ENCODE measurements at regions of chr1 and their contacts with region 1.

Region 1: DNA sequence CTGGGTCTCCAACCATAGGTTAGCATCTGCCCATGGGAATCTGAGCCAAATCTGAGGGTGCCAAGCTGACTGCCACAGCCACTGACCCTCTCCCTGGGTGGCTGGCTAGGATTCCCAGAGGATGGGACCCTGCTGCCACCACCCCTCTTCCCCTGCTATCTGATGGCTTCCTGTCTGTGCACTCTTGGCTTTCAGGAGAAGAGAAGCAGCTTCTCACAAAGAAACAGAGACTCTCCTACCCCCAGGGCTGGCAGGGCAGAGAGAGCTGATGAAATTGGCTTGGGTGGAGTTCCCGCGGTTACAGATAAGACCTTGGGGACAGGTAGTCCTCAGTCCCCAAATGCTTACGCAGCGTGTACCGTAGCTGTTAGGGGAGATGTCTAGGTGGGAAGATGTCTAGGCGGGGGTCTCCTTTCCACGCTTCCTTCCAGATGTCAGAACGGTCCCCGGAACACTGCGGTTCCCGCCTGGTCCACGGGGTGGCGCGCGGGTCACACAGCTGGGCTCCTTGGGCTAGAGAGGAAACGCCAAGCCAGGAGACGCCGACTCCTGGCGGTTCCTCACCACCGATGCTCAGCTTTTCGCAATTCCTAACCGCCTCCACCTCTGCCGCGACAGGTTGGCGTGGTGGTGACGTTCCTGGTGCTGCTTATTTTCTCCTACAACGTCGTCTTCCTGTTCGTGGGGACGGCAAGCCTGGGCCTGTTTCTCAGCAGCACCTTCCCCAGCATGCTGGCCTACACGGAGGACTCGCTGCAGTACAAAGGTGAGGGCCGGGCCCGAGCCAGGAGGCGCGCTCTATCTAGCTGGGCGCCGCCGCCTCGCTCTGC is 40.1 kb downstream of the ELK4 start:
- DNase-seq: peak; percentile 87 to 97 (median 93)

Region 2: GRCh38 chr1:205375835-205376545 is 215.7 kb before region 1 on chr1:
- intact Hi-C with region 1: no loop called
- DNase-seq: peak in 16 of 42 donors; percentile 25 to 72 (median 39)

Region 3: GRCh38 chr1:205410581-205411298 is 181.0 kb before region 1 on chr1:
- intact Hi-C with region 1: no loop called
- DNase-seq: peak in 1 of 42 donors; percentile 3

Region 4: DNA sequence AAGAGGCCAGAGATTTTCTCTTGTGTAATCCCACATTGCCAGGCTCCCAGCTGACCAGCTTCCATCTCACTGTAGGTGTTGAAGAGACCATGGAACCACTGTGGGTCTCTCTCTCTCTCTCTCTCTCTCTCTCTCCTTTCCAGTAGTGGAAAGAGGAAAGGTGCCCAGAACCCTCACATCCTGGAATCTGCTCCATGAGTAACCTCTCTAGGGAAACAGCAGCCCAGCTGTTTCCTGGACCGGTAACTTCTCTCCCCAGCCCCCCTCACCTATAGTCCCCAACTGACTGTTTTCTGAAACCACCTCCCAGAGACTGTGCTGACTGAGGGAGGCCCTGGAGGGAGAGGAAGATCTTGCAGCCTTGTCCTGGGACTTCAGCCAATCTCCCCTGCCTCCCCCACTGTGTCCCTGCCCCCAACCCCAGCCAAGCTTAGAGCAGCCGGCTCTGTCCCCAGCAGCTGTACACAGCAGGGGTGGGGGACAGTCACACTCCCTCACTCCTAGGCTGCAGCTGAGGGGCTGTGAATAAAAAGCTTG is 109.2 kb after region 1 on chr1:
- intact Hi-C with region 1: loop called (anchors 10 kb)
- DNase-seq: peak in 35 of 42 donors; percentile 10 to 71 (median 48)